ENCODE measurements at regions of chr7 and their contacts with region 1.

Region 1: DNA sequence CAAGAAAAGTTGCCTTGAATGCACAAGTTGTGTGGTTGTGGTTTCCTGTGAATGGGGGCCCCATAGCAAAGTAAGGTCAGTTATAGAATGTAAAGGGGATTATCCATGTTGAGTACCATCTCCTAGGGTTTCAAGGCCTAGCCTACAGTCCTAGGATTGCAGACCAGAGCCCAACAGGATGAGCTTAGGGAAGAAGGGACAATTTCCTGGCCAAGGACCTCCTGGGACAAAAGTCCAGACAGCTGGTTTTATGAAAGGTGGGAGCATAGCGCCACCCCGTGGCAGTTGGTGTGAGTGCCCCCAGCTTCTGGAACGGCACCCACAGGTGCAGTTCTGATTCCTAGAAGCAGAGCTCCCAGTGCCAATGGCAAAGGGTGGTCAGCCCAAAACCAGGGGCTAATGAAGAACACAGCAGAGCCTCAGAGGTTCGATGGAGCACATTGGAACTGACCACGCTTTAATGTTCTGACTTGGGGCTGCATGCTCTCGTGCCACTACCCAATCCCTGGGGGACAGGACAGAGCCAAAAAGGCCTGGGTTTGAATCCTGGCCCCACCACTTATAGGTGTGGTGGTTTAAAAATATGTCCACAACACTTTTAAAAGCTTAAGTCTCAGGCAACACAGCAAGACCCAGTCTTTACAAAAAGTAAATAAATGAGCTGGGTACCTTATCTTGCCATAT is 25.8 kb upstream of the TMEM120A start:
- H3K4me3 Mint-ChIP-seq: no peak overlapping the region
- H3K27ac Mint-ChIP-seq: no peak overlapping the region
- H3K4me1 Mint-ChIP-seq: peaks cover 56% of the 10 kb centered on the region
- H3K27me3 Mint-ChIP-seq: no peaks in the 10 kb centered on the region

Region 2: GRCh38 chr7:75762314-75762917 is 257.8 kb before region 1 on chr7:
- intact Hi-C with region 1: loop called (anchors 5 kb)
- H3K4me3 Mint-ChIP-seq: no peak overlapping the region
- H3K27ac Mint-ChIP-seq: peak overlapping the region; percentile 31
- H3K4me1 Mint-ChIP-seq: peaks cover 9% of the 10 kb centered on the region
- H3K27me3 Mint-ChIP-seq: no peaks in the 10 kb centered on the region

Region 3: GRCh38 chr7:75776295-75776971 is 243.7 kb before region 1 on chr7:
- intact Hi-C with region 1: loop called (anchors 5 kb)
- H3K4me3 Mint-ChIP-seq: no peak overlapping the region
- H3K27ac Mint-ChIP-seq: no peak overlapping the region
- H3K4me1 Mint-ChIP-seq: peaks cover 72% of the 10 kb centered on the region
- H3K27me3 Mint-ChIP-seq: peaks cover 24% of the 10 kb centered on the region

Region 4: DNA sequence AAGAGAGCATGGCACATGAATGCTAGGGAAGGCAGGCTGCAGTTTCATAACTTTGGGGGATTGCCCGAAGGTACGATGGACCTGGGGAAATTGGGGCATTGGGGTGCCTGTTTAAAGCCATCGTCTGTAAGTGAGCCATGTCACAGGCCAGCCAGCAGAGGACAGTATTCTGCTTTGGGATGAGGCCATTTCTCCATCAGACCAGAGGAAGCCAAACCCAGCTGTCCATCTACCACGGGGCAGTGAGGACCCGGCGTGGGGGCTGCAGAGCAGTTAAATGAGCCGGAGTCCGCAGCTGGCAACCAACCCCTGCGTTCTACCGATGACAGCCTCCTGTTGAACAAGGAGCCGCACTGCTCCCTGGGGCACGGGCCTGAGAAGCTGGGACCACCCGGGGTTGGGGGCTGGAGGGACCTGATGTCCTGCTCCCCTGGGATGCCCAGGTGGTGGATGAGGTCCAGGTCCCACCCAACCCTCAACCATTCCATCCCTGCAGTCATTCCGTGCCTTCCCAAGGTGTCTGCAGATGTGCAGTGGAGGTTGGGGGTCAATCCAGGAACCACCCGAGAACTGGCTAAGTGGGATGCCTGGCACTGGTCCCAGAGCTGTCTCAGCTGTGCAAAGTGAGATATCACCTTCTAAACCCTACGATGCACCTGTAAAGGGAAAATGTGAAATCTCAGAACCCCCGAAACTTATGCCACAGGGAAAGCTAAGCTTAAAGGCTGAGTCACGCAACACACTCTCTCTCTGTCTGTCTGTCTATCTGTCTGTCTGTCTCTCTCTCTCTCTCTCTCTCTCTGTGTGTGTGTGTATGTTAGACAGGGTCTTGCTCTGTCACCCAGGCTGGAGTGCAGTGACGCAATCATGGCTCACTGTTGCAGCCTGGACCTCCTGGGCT is 153.4 kb before region 1 on chr7:
- intact Hi-C with region 1: loop called (anchors 1 kb)
- H3K4me3 Mint-ChIP-seq: peak overlapping the region; percentile 24
- H3K27ac Mint-ChIP-seq: peak overlapping the region; percentile 75
- H3K4me1 Mint-ChIP-seq: peaks cover 71% of the 10 kb centered on the region
- H3K27me3 Mint-ChIP-seq: peaks cover 1% of the 10 kb centered on the region

Region 5: DNA sequence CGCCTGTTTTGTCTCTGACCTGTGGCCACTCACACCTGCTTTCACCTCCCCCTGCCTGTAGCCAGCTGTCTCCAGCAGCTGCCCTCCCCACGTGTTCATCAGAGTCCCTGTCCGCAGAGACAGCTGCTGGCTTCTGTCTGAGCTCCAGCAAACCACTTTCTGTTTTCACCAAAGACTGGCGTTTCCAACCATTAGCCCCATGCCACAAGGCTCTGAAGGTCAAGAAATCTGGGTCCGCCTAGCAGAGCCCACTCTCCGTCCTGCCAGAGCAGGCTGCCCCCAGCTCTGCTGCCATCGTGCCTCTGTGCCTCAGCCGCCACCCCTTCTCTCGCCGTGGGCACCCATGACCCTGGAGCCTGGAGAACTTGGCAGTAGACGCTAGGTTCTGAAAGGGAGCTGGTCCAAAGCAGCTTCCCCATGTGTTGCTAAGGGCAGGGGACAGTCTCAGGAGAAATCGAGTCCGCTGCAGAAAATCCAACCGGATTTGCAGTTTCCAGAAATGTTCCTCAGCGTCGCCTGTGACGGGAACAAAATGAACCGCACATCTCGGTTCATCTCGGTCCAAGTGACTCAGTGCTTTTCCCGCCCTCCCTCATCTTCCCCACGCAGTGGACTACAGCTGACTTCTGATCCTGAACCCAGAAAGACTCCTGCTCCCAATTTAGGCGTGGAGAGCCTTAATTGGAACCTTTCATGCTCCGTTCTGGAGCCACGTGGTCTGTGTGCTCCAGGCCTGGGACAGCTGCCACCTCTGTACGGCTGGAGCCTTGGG is 53.8 kb before region 1 on chr7:
- intact Hi-C with region 1: no loop called
- H3K4me3 Mint-ChIP-seq: no peak overlapping the region
- H3K27ac Mint-ChIP-seq: no peak overlapping the region
- H3K4me1 Mint-ChIP-seq: peaks cover 64% of the 10 kb centered on the region
- H3K27me3 Mint-ChIP-seq: peaks cover 7% of the 10 kb centered on the region

Region 6: GRCh38 chr7:76091506-76091905 is 71.3 kb after region 1 on chr7:
- intact Hi-C with region 1: no loop called
- H3K4me3 Mint-ChIP-seq: no peak overlapping the region
- H3K27ac Mint-ChIP-seq: no peak overlapping the region
- H3K4me1 Mint-ChIP-seq: no peaks in the 10 kb centered on the region
- H3K27me3 Mint-ChIP-seq: peaks cover 15% of the 10 kb centered on the region